CD4-positive, alpha-beta T cell (primary cell): ENCODE measurements at regions of chr1 and their contacts with region 1.

Region 1: GRCh38 chr1:248906009-248906752 is at the start of gene PGBD2:
- DNase-seq: peak; percentile 88 to 98 (median 95)
- ATAC-seq: peak; percentile 86
- H3K4me3 ChIP-seq: peak within 1 kb of the TSS; percentile 78
- H3K4me3 Mint-ChIP-seq: peak within 1 kb of the TSS; percentile 99
- H3K27ac ChIP-seq: peak within 1 kb of the TSS; percentile 67 to 83
- H3K27ac Mint-ChIP-seq: peak within 1 kb of the TSS; percentile 98
- H3K4me1 ChIP-seq: peaks cover 17% of the 10 kb centered on the region
- H3K4me1 Mint-ChIP-seq: peaks cover 34% of the 10 kb centered on the region
- H3K27me3 ChIP-seq: no peaks in the 10 kb centered on the region
- H3K27me3 Mint-ChIP-seq: no peaks in the 10 kb centered on the region
- CTCF ChIP-seq: peak; percentile 68
- total RNA-seq, gene PGBD2: 0.78 to 0.85 TPM

Region 2: GRCh38 chr1:248686815-248687214 is 219.4 kb before region 1 on chr1:
- CTCF ChIA-PET with region 1: no interaction called
- POLR2A ChIA-PET with region 1: no interaction called
- intact Hi-C with region 1: no loop called
- DNase-seq: peak in 4 of 14 experiments; percentile 14 to 58 (median 40)
- ATAC-seq: no peak
- H3K4me3 ChIP-seq: no peak overlapping the region
- H3K4me3 Mint-ChIP-seq: no peak overlapping the region
- H3K27ac ChIP-seq: no peak overlapping the region
- H3K27ac Mint-ChIP-seq: no peak overlapping the region
- H3K4me1 ChIP-seq: no peaks in the 10 kb centered on the region
- H3K4me1 Mint-ChIP-seq: no peaks in the 10 kb centered on the region
- H3K27me3 ChIP-seq: no peaks in the 10 kb centered on the region
- H3K27me3 Mint-ChIP-seq: peaks cover 19% of the 10 kb centered on the region
- CTCF ChIP-seq: peak; percentile 38

Region 3: GRCh38 chr1:248825909-248826760 is 80.0 kb before region 1 on chr1 and contains the start of gene SH3BP5L:
- CTCF ChIA-PET with region 1: interaction called, 4 read pairs
- POLR2A ChIA-PET with region 1: interaction called, 15 read pairs
- intact Hi-C with region 1: loop called (anchors 1 kb)
- DNase-seq: peak; percentile 80 to 97 (median 87)
- ATAC-seq: peak; percentile 84
- H3K4me3 ChIP-seq: peak within 1 kb of the TSS; percentile 83
- H3K4me3 Mint-ChIP-seq: peak within 1 kb of the TSS; percentile 95
- H3K27ac ChIP-seq: peak within 1 kb of the TSS; percentile 96 to 98
- H3K27ac Mint-ChIP-seq: peak within 1 kb of the TSS; percentile 95
- H3K4me1 ChIP-seq: peaks cover 58% of the 10 kb centered on the region
- H3K4me1 Mint-ChIP-seq: peaks cover 64% of the 10 kb centered on the region
- H3K27me3 ChIP-seq: no peaks in the 10 kb centered on the region
- H3K27me3 Mint-ChIP-seq: no peaks in the 10 kb centered on the region
- CTCF ChIP-seq: peak; percentile 83
- total RNA-seq, gene SH3BP5L: 21.7 to 25.2 TPM

Region 4: GRCh38 chr1:248837794-248838356 is 68.3 kb before region 1 on chr1 and contains the start of gene ZNF672:
- CTCF ChIA-PET with region 1: no interaction called
- POLR2A ChIA-PET with region 1: interaction called, 13 read pairs
- intact Hi-C with region 1: loop called in 1 of 2 experiments (anchors 1 kb)
- DNase-seq: peak; percentile 81 to 96 (median 92)
- ATAC-seq: peak; percentile 85
- H3K4me3 ChIP-seq: peak within 1 kb of the TSS; percentile 81
- H3K4me3 Mint-ChIP-seq: no peak within 1 kb of the TSS
- H3K27ac ChIP-seq: peak within 1 kb of the TSS; percentile 94 to 99
- H3K27ac Mint-ChIP-seq: no peak within 1 kb of the TSS
- H3K4me1 ChIP-seq: peaks cover 37% of the 10 kb centered on the region
- H3K4me1 Mint-ChIP-seq: peaks cover 30% of the 10 kb centered on the region
- H3K27me3 ChIP-seq: no peaks in the 10 kb centered on the region
- H3K27me3 Mint-ChIP-seq: peaks cover 7% of the 10 kb centered on the region
- CTCF ChIP-seq: no peak
- total RNA-seq, gene ZNF672: 35.9 to 38.4 TPM

Region 5: DNA sequence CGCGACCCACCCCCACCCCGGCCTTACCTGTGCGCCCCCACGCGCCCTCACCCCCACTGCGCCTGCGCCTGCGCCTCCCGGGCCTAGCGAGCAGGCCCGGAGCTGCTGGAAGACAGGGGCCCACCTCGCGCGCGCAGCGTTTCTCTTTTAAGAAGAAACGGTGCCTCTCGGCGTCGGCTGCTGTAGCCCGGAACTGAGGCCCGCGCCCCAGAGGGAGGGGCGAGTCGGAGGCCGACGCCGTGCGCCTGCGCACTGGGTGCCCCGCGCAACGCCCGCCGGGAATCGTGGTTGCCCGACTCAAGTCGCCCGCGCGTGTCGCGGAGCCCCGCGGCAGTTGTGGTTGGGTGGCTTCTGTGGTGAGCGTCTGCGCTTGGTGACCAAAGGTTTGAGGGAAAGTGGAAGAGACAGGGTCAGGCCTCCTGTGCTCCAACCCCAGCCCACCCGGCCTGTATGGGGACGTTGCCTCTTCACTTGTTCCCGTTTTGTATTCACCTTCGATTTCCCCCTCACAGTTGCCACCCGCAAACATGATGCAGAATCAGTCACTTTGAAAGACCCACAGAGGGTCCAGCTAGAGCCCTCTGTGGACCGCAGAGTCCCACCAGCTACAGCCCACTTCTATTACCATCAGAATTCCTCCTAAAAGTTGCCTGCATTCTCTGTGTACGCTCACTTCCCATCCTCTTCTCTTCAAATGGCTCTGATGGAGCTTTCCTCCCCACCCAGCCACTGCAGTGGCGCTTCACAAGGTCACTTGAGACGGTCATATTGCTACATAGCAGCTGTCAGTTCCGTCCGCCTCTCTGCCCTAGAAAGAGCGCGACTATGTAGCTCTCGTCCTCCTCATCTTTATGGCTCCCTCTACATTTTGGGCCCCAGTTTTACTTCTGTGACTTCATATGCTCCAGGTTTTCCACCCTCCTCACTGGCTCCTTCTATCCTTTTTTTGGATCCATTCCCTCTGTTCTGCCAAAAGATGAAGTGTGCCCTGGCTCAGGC is 47.0 kb before region 1 on chr1 and contains the start of gene ZNF692:
- CTCF ChIA-PET with region 1: interaction called, 7 read pairs
- POLR2A ChIA-PET with region 1: interaction called, 9 read pairs
- intact Hi-C with region 1: loop called in 1 of 2 experiments (anchors 2 kb)
- DNase-seq: peak; percentile 92 to 99 (median 97)
- ATAC-seq: peak; percentile 84
- H3K4me3 ChIP-seq: peak within 1 kb of the TSS; percentile 79
- H3K4me3 Mint-ChIP-seq: peak within 1 kb of the TSS; percentile 95
- H3K27ac ChIP-seq: peak within 1 kb of the TSS; percentile 77 to 80
- H3K27ac Mint-ChIP-seq: peak within 1 kb of the TSS; percentile 93
- H3K4me1 ChIP-seq: peaks cover 57% of the 10 kb centered on the region
- H3K4me1 Mint-ChIP-seq: peaks cover 75% of the 10 kb centered on the region
- H3K27me3 ChIP-seq: no peaks in the 10 kb centered on the region
- H3K27me3 Mint-ChIP-seq: no peaks in the 10 kb centered on the region
- CTCF ChIP-seq: no peak
- total RNA-seq, gene ZNF692: 23.3 to 27.3 TPM

Region 6: GRCh38 chr1:248873409-248873992 is 32.7 kb before region 1 on chr1:
- CTCF ChIA-PET with region 1: no interaction called
- POLR2A ChIA-PET with region 1: interaction called, 6 read pairs
- intact Hi-C with region 1: loop called (anchors 1 kb)
- DNase-seq: peak; percentile 77 to 95 (median 91)
- ATAC-seq: peak; percentile 75
- H3K4me3 ChIP-seq: peak overlapping the region; percentile 71
- H3K4me3 Mint-ChIP-seq: peak overlapping the region; percentile 99
- H3K27ac ChIP-seq: peak overlapping the region; percentile 52 to 79
- H3K27ac Mint-ChIP-seq: peak overlapping the region; percentile 99
- H3K4me1 ChIP-seq: peaks cover 22% of the 10 kb centered on the region
- H3K4me1 Mint-ChIP-seq: peaks cover 35% of the 10 kb centered on the region
- H3K27me3 ChIP-seq: no peaks in the 10 kb centered on the region
- H3K27me3 Mint-ChIP-seq: peaks cover 14% of the 10 kb centered on the region
- CTCF ChIP-seq: no peak

Region 7: DNA sequence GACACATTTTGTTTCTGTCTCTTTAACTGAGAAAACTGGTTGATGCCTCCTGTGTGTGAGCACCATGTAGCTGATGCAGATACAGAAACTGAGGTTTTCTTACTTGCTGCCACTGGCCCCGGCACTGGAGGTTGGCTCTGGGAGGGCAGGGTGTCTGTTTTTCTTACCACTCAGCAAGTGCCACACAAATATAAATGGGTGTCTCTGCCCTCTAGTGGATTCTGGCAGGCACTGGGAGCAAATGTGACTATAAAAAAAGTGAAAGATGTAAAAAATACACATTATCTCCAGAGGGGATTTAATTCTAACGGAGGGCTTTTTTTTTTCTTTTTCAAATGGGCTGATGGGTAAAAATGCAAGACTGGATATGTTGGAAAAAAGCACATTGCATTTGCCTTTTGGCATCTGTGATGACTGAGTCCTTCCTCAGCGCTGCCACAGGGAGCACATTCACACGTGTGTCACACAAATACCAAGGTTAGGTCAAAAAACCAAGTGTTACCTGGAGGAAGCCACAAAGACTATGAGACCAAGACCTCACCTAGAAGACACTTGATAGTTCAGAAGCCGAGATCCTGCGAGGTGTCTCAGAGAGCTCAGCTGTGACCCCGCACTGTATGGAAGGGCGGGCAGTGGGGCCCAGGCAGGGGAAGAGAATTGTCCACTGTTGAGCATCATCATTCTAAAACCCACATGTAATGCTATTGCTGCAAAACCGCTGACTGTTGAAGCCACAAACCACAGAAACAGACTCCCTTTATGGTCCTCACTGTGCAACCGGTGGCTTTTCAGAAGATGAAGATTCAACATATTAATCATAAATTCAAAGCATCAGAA is 18.7 kb after region 1 on chr1:
- CTCF ChIA-PET with region 1: no interaction called
- POLR2A ChIA-PET with region 1: interaction called, 4 read pairs
- intact Hi-C with region 1: loop called (anchors 1 kb)
- DNase-seq: peak in 12 of 14 experiments; percentile 14 to 78 (median 41)
- ATAC-seq: peak; percentile 93
- H3K4me3 ChIP-seq: no peak overlapping the region
- H3K4me3 Mint-ChIP-seq: no peak overlapping the region
- H3K27ac ChIP-seq: no peak overlapping the region
- H3K27ac Mint-ChIP-seq: no peak overlapping the region
- H3K4me1 ChIP-seq: peaks cover 8% of the 10 kb centered on the region
- H3K4me1 Mint-ChIP-seq: peaks cover 13% of the 10 kb centered on the region
- H3K27me3 ChIP-seq: no peaks in the 10 kb centered on the region
- H3K27me3 Mint-ChIP-seq: no peaks in the 10 kb centered on the region
- CTCF ChIP-seq: peak; percentile 77